ENCODE measurements at regions of chr3 and their contacts with region 1.

Region 1: GRCh38 chr3:101779047-101779821 is at the start of gene NXPE3:
- DNase-seq: peak; percentile 92 to 94
- ATAC-seq: peak; percentile 95 to 98 (median 96)
- H3K4me3 ChIP-seq: peak within 1 kb of the TSS; percentile 59 to 98 (median 81)
- H3K27ac ChIP-seq: peak within 1 kb of the TSS; percentile 51 to 95 (median 90)
- H3K4me1 ChIP-seq: peaks cover 0 to 30% (median 25%) of the 10 kb centered on the region in 9 donors
- H3K27me3 ChIP-seq: no peaks in the 10 kb centered on the region
- CTCF ChIP-seq: no peak
- total RNA-seq, gene NXPE3: 30.2 to 50.3 (median 35.7) TPM

Region 2: GRCh38 chr3:101685870-101686412 is 93.3 kb before region 1 on chr3:
- intact Hi-C with region 1: loop called in 1 of 10 experiments (anchors 2 kb)
- DNase-seq: no peak
- ATAC-seq: peak; percentile 5 to 48 (median 28)
- H3K4me3 ChIP-seq: peak overlapping the region; percentile 42 to 96 (median 76)
- H3K27ac ChIP-seq: peak overlapping the region; percentile 10 to 97 (median 90)
- H3K4me1 ChIP-seq: peaks cover 5 to 63% (median 37%) of the 10 kb centered on the region in 9 donors
- H3K27me3 ChIP-seq: no peaks in the 10 kb centered on the region
- CTCF ChIP-seq: no peak

Region 3: GRCh38 chr3:101703169-101703568 is 76.1 kb before region 1 on chr3:
- intact Hi-C with region 1: no loop called
- DNase-seq: no peak
- ATAC-seq: no peak
- H3K4me3 ChIP-seq: no peak overlapping the region
- H3K27ac ChIP-seq: no peak overlapping the region
- H3K4me1 ChIP-seq: no peaks in the 10 kb centered on the region
- H3K27me3 ChIP-seq: no peaks in the 10 kb centered on the region
- CTCF ChIP-seq: no peak

Region 4: DNA sequence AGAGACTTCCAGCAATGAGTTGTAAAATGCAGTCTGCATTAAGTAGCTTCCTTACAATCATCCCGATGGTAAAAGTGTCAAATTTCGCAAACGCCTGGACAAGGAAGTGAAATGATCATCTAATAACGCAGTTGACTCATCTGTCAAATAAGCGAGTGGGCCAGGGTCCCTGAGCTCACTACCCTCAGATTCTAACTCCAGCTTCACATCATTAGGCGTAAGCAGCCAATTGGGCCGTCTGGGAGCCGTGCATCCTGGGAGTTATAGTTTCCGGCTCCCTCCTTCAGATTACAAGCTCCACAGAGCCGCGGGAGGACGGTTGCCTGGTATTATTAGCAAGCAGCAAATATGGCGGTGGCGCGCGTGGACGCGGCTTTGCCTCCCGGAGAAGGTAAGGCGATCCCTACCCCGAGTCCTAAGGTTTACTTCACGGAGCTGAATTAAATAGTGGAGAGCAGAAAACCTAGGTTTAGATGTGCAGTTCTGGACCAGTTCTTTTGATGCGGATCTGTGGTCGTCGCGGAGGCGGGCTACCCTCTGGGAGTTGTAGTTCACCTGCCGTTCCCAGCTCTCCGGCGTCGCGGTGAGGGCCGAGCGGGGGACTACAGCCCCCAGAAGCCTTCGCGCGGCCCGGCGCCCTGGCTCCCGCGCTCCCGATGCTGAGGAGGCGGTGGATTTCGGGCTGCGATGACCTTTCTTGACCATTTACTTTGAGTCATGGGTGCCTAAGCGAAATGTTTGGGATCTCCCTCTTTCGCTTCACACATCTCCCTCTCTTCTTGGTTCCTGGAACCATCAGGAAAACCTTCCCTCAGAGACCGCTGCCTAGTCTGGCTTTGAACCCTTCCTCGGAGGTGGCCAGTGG is 54.7 kb before region 1 on chr3 and contains the start of gene CEP97:
- intact Hi-C with region 1: loop called in 4 of 10 experiments (anchors 2 to 10 kb)
- DNase-seq: peak; percentile 89 to 91
- ATAC-seq: peak; percentile 99 to 100 (median 100)
- H3K4me3 ChIP-seq: peak within 1 kb of the TSS; percentile 43 to 89 (median 74)
- H3K27ac ChIP-seq: peak within 1 kb of the TSS in 9 of 10 donors; percentile 46 to 85 (median 82)
- H3K4me1 ChIP-seq: peaks cover 0 to 37% (median 13%) of the 10 kb centered on the region in 9 donors
- H3K27me3 ChIP-seq: no peaks in the 10 kb centered on the region
- CTCF ChIP-seq: no peak
- total RNA-seq, gene CEP97: 5.7 to 11.4 (median 7.8) TPM

Region 5: DNA sequence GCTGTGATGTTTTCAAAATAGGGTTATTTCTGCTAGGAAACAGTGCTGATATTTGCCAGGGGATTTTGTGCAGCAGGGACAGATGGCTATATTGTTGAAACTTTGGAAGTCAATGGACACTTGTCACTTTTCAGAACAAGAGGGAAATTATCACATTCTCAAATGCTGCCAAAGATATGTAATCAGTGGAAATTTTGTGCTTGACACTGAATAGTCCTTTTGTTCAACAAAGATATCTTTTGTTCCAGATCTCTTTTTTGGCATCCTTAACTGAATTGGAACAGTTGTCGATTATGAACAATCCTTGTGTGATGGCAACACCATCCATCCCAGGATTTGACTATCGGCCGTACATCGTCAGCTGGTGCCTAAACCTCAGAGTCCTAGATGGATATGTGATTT is 47.0 kb before region 1 on chr3:
- intact Hi-C with region 1: loop called in 4 of 10 experiments (anchors 5 to 10 kb)
- DNase-seq: no peak
- ATAC-seq: no peak
- H3K4me3 ChIP-seq: no peak overlapping the region
- H3K27ac ChIP-seq: no peak overlapping the region
- H3K4me1 ChIP-seq: no peaks in the 10 kb centered on the region
- H3K27me3 ChIP-seq: no peaks in the 10 kb centered on the region
- CTCF ChIP-seq: no peak

Region 6: GRCh38 chr3:101819758-101820157 is 40.5 kb after region 1 on chr3:
- intact Hi-C with region 1: no loop called
- DNase-seq: no peak
- ATAC-seq: no peak
- H3K4me3 ChIP-seq: no peak overlapping the region
- H3K27ac ChIP-seq: no peak overlapping the region
- H3K4me1 ChIP-seq: peaks cover 0 to 21% (median 2%) of the 10 kb centered on the region in 9 donors
- H3K27me3 ChIP-seq: no peaks in the 10 kb centered on the region
- CTCF ChIP-seq: no peak

Measured in heart right ventricle (tissue), 16 donors.